ENCODE measurements at regions of chr4 and their contacts with region 1.

Region 1: DNA sequence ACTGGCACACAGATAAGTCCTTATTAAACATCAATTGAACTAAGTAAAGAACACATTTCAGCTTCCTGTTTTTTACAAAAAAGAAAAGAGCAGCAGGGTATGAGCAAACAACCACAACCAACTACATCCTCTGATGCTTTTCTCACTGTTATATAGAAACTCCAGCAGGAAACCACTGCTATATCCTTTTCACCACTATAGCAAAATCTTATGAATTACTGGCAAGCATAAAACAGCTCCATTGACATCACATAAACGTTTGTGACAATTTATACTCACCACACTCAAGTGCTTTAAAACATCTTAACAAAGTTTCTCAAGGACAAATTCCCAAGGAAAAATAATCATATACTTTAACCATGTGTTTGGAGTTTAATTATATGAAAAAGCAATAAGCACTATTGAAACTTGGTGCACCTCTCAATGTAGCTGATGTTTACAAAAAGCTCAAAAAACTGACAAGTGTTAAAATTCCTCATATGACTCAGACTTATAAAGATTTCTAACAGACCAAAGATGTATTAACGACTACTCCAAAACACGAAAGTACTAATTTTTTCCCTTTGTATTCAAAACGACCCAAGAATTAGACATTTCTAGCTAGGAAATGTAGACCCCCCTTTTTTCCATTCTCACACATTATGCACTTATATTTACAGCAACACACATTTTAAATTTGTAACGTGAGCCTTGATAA is 12.9 kb downstream of the GPRIN3 start:
- DNase-seq: peak; percentile 50
- H3K4me3 Mint-ChIP-seq: peak overlapping the region; percentile 62
- H3K27ac Mint-ChIP-seq: peak overlapping the region; percentile 96
- H3K4me1 Mint-ChIP-seq: peaks cover 84% of the 10 kb centered on the region
- H3K27me3 Mint-ChIP-seq: no peaks in the 10 kb centered on the region

Region 2: DNA sequence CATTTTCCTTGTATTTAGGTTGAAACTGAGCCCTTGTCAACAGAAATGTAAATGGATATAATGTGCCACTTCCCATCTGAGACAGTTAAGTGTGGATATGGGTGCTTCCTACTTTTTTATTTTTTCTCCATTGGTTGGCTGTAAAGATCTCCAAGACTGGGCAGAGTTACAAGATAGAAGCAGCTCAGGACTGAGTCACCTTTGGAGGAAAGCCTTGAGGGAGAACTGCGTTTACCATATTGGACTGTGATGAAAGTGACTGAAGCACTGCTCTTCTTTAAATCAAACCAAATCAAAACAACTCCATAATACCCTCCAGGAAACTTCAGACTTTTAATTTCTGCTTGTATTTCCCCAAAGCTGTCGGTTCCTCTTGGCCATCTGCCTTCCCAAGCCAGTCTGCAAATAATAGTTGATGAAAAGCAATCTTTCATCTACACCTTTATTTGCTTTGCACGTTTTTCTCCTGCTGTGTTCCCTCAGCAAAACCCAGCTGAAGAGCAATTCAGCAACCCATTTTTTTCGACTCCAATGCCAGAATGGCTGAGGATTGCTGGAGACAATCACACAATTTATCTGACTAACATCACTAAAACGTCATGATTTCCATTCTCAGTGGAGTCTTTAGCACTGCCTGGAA is 81.5 kb before region 1 on chr4:
- CTCF ChIA-PET with region 1: no interaction called
- POLR2A ChIA-PET with region 1: no interaction called
- DNase-seq: no peak
- H3K4me3 Mint-ChIP-seq: no peak overlapping the region
- H3K27ac Mint-ChIP-seq: no peak overlapping the region
- H3K4me1 Mint-ChIP-seq: no peaks in the 10 kb centered on the region
- H3K27me3 Mint-ChIP-seq: peaks cover 8% of the 10 kb centered on the region

Region 3: DNA sequence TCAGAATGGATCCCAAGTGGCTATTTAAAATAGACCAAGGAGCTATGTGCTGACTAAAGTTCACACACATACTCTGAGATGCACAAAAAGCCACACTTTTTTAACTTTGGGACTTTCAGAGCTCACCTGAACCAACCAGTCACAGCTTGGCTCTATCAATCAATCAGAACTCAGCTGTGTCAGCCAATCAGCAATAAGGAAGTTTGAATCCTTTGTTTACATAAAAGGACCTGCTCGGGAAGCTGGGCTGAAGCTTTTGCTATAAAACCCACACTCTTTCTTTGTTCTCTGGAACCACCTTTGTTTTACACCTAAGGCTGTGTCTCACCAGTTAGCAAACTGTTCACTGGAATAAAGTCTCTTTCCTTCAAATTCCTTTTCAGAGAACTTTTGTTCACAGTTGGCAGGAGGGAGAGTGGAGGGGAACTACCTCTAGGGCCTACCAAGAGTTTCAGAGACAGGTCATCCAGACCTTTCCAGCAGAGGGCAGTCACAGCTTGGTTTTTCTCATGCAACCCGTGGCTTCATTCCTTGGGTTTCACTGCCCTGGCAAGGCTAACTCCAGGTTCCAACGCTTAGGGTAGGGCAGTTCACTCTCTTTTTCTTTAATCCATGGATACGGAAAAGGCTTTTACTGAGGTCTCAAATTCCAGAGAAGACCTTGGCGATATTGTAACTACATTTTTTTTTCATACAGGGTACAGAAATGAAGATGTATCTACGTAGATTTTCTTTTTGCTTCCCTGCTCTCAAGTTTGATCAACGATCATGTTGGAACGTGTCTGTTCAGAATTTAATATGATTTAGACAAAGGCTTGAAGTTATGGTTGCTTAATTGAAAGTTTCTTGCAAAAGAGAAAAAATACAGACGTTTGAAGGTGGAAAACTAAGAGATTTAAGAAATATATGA is 67.8 kb before region 1 on chr4:
- CTCF ChIA-PET with region 1: interaction called, 10 read pairs
- POLR2A ChIA-PET with region 1: no interaction called
- DNase-seq: peak; percentile 86
- H3K4me3 Mint-ChIP-seq: no peak overlapping the region
- H3K27ac Mint-ChIP-seq: peak overlapping the region; percentile 38
- H3K4me1 Mint-ChIP-seq: peaks cover 8% of the 10 kb centered on the region
- H3K27me3 Mint-ChIP-seq: no peaks in the 10 kb centered on the region

Region 4: DNA sequence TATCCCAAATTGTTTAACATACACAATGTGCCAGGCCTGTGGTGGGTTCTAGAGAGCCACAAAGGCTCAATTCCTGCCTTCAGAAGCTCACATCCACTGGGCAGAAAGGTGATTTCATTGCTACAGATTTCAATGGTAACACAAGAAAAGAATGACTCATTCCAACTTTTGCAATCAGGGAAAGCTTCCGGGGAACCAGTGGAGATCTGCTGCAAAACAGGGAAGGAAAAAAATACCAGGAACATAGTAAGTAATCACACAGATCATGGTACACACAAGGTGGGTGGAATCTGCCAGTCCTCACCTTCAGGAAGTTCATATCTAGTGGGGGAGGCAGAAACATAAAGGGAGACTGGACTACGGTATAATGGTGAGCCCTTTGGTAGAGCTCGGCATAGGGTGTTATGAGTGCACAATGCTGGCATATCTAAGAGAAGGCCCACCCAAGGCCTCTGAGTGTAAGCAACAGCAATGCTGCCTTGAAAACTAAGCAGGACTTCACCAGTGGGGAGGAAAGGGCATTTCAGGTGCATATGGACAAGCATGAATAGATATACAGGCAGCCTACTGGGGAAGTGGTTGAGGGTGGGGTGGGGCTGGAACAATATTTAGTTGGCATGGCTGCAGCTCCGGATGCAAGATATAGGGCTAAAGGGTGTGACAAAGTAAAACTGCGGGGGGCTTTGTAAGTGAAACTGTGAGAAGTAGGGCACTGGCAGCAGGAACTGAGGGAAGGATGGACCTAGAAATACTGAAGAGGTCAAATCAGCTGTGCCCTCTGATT is 11.3 kb before region 1 on chr4:
- CTCF ChIA-PET with region 1: interaction called, 15 read pairs
- POLR2A ChIA-PET with region 1: no interaction called
- DNase-seq: peak; percentile 43
- H3K4me3 Mint-ChIP-seq: peak overlapping the region; percentile 35
- H3K27ac Mint-ChIP-seq: peak overlapping the region; percentile 83
- H3K4me1 Mint-ChIP-seq: peaks cover 63% of the 10 kb centered on the region
- H3K27me3 Mint-ChIP-seq: no peaks in the 10 kb centered on the region

Region 5: GRCh38 chr4:89307446-89308160 is 12.9 kb after region 1 on chr4 and contains the start of gene GPRIN3:
- CTCF ChIA-PET with region 1: interaction called, 14 read pairs
- POLR2A ChIA-PET with region 1: interaction called, 7 read pairs
- DNase-seq: peak; percentile 61
- H3K4me3 Mint-ChIP-seq: peak within 1 kb of the TSS; percentile 90
- H3K27ac Mint-ChIP-seq: peak within 1 kb of the TSS; percentile 92
- H3K4me1 Mint-ChIP-seq: peaks cover 53% of the 10 kb centered on the region
- H3K27me3 Mint-ChIP-seq: no peaks in the 10 kb centered on the region
- total RNA-seq, gene GPRIN3: 51.1 to 57.4 TPM

Measured in activated CD4-positive, alpha-beta T cell treated with anti-CD3 and anti-CD28 coated beads, Interleukin-2, amount 10 ng/mL, durations not matched to agents 7 days and 5 days (primary cell).